ENCODE measurements at regions of chr17 and their contacts with region 1.

Region 1: GRCh38 chr17:72126563-72127486 is 6.0 kb downstream of the SOX9 start:
- DNase-seq: no peak
- H3K4me3 ChIP-seq: no peak overlapping the region
- H3K27ac ChIP-seq: no peak overlapping the region
- H3K4me1 ChIP-seq: no peaks in the 10 kb centered on the region
- H3K27me3 ChIP-seq: no peaks in the 10 kb centered on the region
- CTCF ChIP-seq: no peak
- EP300 ChIP-seq: no peak
- POLR2A ChIP-seq: no peak

Region 2: GRCh38 chr17:71765437-71765836 is 361.4 kb before region 1 on chr17:
- intact Hi-C with region 1: loop called in 1 of 4 experiments (anchors 5 kb)
- DNase-seq: no peak
- H3K4me3 ChIP-seq: no peak overlapping the region
- H3K27ac ChIP-seq: no peak overlapping the region
- H3K4me1 ChIP-seq: no peaks in the 10 kb centered on the region
- H3K27me3 ChIP-seq: no peaks in the 10 kb centered on the region
- CTCF ChIP-seq: no peak
- EP300 ChIP-seq: no peak
- POLR2A ChIP-seq: no peak